Ascending aorta (tissue), 2 donors: ENCODE measurements at regions of chr16 and their contacts with region 1.

Region 1: GRCh38 chr16:4500272-4500671 is 24.1 kb downstream of the HMOX2 start:
- DNase-seq: no peak
- H3K4me3 ChIP-seq: peak overlapping the region; percentile 14 to 49
- H3K27ac ChIP-seq: peak overlapping the region; percentile 74 to 78
- H3K4me1 ChIP-seq: peaks cover 3 to 22% of the 10 kb centered on the region in 2 donors
- H3K27me3 ChIP-seq: no peaks in the 10 kb centered on the region
- CTCF ChIP-seq: no peak

Region 2: GRCh38 chr16:3907586-3907985 is 592.7 kb before region 1 on chr16:
- intact Hi-C with region 1: no loop called
- DNase-seq: no peak
- H3K4me3 ChIP-seq: no peak overlapping the region
- H3K27ac ChIP-seq: no peak overlapping the region
- H3K4me1 ChIP-seq: no peaks in the 10 kb centered on the region
- H3K27me3 ChIP-seq: no peaks in the 10 kb centered on the region
- CTCF ChIP-seq: no peak

Region 3: DNA sequence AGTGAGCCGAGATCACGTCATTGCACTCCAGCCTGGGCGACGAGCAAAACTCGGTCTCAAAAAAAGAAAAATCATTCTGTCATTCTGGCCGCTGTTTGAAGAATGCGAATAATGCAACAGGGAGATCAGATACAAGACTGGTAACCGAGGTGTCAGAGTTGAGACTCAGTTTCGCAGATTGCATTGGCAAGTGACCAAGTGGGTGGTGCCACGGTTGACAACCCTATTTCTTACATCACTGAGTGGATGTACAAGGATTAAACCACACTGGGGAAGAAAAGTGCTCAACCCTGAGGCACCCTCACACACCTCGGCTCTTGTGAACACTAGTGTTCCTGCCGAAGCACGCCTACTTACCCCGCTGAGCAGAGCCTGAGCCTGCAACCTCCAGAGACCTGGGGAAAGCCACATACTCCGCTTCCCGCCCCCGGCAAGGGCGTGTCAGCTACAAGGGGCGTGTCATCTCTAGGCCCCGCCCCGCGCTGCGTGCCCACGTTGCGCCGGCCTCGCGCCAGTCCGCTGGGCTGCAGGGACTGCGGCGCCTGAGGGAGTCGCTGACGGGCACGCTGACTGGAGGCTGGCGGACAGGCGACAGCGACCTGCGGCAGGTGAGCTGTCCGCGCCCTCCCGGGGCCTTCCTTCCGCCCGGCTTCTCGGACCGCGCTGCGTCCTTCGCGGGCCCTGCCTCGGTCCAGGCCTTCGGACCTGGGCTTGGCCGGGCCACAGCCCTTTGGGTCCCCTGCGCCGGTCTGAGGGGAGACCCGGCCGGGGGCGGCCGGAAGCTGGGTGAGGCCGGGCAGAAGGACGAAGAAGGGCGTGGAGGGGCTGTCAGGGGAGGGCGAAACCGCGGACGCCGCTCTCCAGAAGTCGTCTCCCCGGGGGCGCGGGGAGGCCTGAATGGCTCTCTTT is 24.1 kb before region 1 on chr16 and contains the start of gene HMOX2:
- intact Hi-C with region 1: loop called (anchors 2 kb)
- DNase-seq: peak; percentile 73 to 95
- H3K4me3 ChIP-seq: peak within 1 kb of the TSS; percentile 61 to 93
- H3K27ac ChIP-seq: peak within 1 kb of the TSS; percentile 86 to 89
- H3K4me1 ChIP-seq: peaks cover 10 to 26% of the 10 kb centered on the region in 2 donors
- H3K27me3 ChIP-seq: no peaks in the 10 kb centered on the region
- CTCF ChIP-seq: peak; percentile 49 to 61 (median 61)
- total RNA-seq, gene HMOX2: 36.7 TPM